A673 (cell line): ENCODE measurements at regions of chr1 and their contacts with region 1.

Region 1: GRCh38 chr1:190289897-190290296 is 187.8 kb downstream of the BRINP3 start:
- DNase-seq: no peak
- H3K4me3 ChIP-seq: no peak overlapping the region
- H3K27ac ChIP-seq: no peak overlapping the region
- H3K4me1 ChIP-seq: no peaks in the 10 kb centered on the region
- H3K27me3 ChIP-seq: no peaks in the 10 kb centered on the region
- CTCF ChIP-seq: no peak

Region 2: GRCh38 chr1:190226006-190226405 is 63.9 kb before region 1 on chr1:
- CTCF ChIA-PET with region 1: no interaction called
- POLR2A ChIA-PET with region 1: no interaction called
- intact Hi-C with region 1: no loop called
- DNase-seq: no peak
- H3K4me3 ChIP-seq: no peak overlapping the region
- H3K27ac ChIP-seq: no peak overlapping the region
- H3K4me1 ChIP-seq: no peaks in the 10 kb centered on the region
- H3K27me3 ChIP-seq: no peaks in the 10 kb centered on the region
- CTCF ChIP-seq: no peak

Region 3: GRCh38 chr1:190258003-190258402 is 31.9 kb before region 1 on chr1:
- CTCF ChIA-PET with region 1: no interaction called
- POLR2A ChIA-PET with region 1: no interaction called
- intact Hi-C with region 1: no loop called
- DNase-seq: no peak
- H3K4me3 ChIP-seq: no peak overlapping the region
- H3K27ac ChIP-seq: no peak overlapping the region
- H3K4me1 ChIP-seq: no peaks in the 10 kb centered on the region
- H3K27me3 ChIP-seq: no peaks in the 10 kb centered on the region
- CTCF ChIP-seq: no peak

Region 4: GRCh38 chr1:190338829-190339228 is 48.9 kb after region 1 on chr1:
- CTCF ChIA-PET with region 1: no interaction called
- POLR2A ChIA-PET with region 1: no interaction called
- intact Hi-C with region 1: loop called (anchors 5 kb)
- DNase-seq: no peak
- H3K4me3 ChIP-seq: no peak overlapping the region
- H3K27ac ChIP-seq: no peak overlapping the region
- H3K4me1 ChIP-seq: no peaks in the 10 kb centered on the region
- H3K27me3 ChIP-seq: no peaks in the 10 kb centered on the region
- CTCF ChIP-seq: no peak